ENCODE measurements at regions of chr13 and their contacts with region 1.

Region 1: GRCh38 chr13:41456768-41457588 is at the start of gene RGCC:
- DNase-seq: peak; percentile 91 to 95 (median 93)
- H3K4me3 ChIP-seq: peak within 1 kb of the TSS; percentile 50 to 92 (median 79)
- H3K4me3 Mint-ChIP-seq: peak within 1 kb of the TSS; percentile 89 to 94
- H3K27ac ChIP-seq: peak within 1 kb of the TSS in 1 of 2 donors; percentile 72
- H3K27ac Mint-ChIP-seq: peak within 1 kb of the TSS; percentile 23 to 93 (median 87)
- H3K4me1 ChIP-seq: peaks cover 41 to 49% of the 10 kb centered on the region in 2 donors
- H3K4me1 Mint-ChIP-seq: peaks cover 43% of the 10 kb centered on the region
- H3K27me3 ChIP-seq: peaks cover 6 to 30% of the 10 kb centered on the region in 2 donors
- H3K27me3 Mint-ChIP-seq: peaks cover 24 to 49% (median 35%) of the 10 kb centered on the region in 3 donors
- CTCF ChIP-seq: no peak
- polyA plus RNA-seq, gene RGCC: 4.3 to 49.5 (median 26.0) TPM

Region 2: GRCh38 chr13:39552246-39552645 is 1904.7 kb before region 1 on chr13:
- intact Hi-C with region 1: no loop called
- DNase-seq: no peak
- H3K4me3 ChIP-seq: no peak overlapping the region
- H3K4me3 Mint-ChIP-seq: no peak overlapping the region
- H3K27ac ChIP-seq: no peak overlapping the region
- H3K27ac Mint-ChIP-seq: no peak overlapping the region
- H3K4me1 ChIP-seq: no peaks in the 10 kb centered on the region
- H3K4me1 Mint-ChIP-seq: peaks cover 3% of the 10 kb centered on the region
- H3K27me3 ChIP-seq: no peaks in the 10 kb centered on the region
- H3K27me3 Mint-ChIP-seq: peaks cover 0 to 1% (median 0%) of the 10 kb centered on the region in 3 donors
- CTCF ChIP-seq: no peak

Region 3: DNA sequence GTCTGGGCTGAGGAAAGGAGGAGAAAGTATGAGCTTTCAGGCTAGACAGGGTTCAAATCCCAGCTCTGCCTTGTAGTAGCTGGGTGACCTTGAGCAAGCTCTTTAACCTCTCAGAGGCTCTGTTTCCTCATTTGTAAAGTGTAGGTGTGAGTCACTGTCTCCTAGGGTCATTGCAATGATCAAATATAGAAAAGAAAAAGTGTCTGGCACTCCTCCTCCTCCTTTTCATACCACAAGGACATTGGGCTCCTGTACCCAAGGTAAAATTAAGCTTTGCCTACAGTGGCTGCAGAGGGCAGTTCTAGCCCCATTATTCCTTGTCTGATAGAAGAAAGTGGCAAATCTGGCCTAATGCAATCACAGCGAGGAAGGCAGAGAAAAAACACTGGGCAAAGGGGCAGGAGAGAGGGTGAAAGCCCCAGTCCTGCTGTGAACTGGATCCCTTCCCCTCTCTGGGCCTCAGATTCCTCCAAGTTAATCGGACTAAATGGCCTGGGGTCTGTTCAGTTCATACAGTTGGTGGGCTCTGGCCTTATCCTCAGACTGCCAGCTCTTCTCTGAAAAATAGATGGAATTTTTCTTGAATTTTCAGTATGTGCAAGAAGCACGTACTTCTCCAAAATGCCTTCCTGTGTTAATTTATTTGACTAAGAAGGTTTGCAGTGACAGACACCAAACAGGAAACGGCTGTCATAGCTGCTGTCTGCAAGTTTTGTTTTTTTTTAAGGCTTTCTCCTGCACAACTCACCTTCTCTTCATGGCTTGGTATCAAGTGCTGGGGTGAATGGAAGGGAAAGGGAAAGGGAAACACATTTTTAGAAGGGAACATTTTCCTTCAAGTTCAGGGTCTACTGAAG is 35.7 kb after region 1 on chr13:
- intact Hi-C with region 1: loop called (anchors 5 kb)
- DNase-seq: peak; percentile 68 to 90 (median 89)
- H3K4me3 ChIP-seq: peak overlapping the region in 1 of 3 experiments; percentile 31
- H3K4me3 Mint-ChIP-seq: peak overlapping the region in 1 of 2 donors; percentile 65
- H3K27ac ChIP-seq: peak overlapping the region; percentile 80 to 97
- H3K27ac Mint-ChIP-seq: peak overlapping the region; percentile 86 to 97 (median 93)
- H3K4me1 ChIP-seq: peaks cover 35 to 36% of the 10 kb centered on the region in 2 donors
- H3K4me1 Mint-ChIP-seq: peaks cover 41% of the 10 kb centered on the region
- H3K27me3 ChIP-seq: no peaks in the 10 kb centered on the region
- H3K27me3 Mint-ChIP-seq: peaks cover 2 to 4% (median 3%) of the 10 kb centered on the region in 3 donors
- CTCF ChIP-seq: no peak

Measured in CD14-positive monocyte (primary cell).